Activated CD4-positive, alpha-beta T cell treated with anti-CD3 and anti-CD28 coated beads for 36 hours (primary cell): ENCODE measurements at regions of chr2 and their contacts with region 1.

Region 1: GRCh38 chr2:88016086-88016959 is at the start of gene RNU2-63P:
- DNase-seq: peak; percentile 86
- ATAC-seq: peak; percentile 93
- H3K4me3 Mint-ChIP-seq: peak within 1 kb of the TSS; percentile 93
- H3K27ac Mint-ChIP-seq: peak within 1 kb of the TSS; percentile 99
- H3K4me1 Mint-ChIP-seq: peaks cover 16% of the 10 kb centered on the region
- H3K27me3 Mint-ChIP-seq: peaks cover 3% of the 10 kb centered on the region
- total RNA-seq, gene RNU2-63P: 1.7 to 8.5 TPM

Region 2: DNA sequence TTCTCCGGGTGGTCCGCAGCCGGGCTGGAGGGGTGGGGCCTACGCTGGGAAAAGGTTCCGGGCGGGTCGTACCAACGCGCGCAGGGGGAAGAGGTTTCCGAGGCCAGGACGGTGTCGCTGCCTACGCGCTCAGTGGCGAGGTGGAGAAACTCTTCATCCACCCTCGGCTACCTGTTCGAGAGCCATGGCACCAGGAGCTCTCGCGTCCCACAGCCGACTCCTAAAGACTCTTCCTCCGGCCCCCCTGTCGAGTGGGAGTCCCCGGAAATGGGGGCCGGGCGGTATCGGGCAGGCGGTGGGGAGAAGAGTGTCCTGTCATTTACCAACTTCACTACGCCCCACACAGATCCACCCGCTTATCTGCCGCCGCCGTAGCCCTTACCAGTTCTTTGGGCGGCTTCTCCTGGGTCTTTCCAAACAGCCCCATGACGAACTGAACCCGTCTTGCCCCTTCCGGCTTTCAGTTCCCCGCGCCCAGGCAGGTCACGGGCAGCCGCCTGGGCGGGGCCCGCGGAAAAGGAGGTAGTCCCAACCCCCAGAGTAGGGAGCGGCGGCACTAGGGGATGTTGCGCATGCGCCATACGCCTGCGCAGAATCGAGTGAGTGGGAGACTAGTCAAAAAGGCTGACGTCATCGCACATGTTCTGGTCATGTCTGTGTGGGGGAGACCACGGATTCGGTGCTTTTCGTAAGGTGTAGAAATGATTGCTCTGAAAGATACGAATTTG is 1453.2 kb before region 1 on chr2 and contains the start of gene CHMP3:
- CTCF ChIA-PET with region 1: no interaction called
- POLR2A ChIA-PET with region 1: no interaction called
- intact Hi-C with region 1: no loop called
- DNase-seq: peak; percentile 97
- ATAC-seq: peak; percentile 92
- H3K4me3 Mint-ChIP-seq: peak within 1 kb of the TSS; percentile 95
- H3K27ac Mint-ChIP-seq: peak within 1 kb of the TSS; percentile 99
- H3K4me1 Mint-ChIP-seq: peaks cover 30% of the 10 kb centered on the region
- H3K27me3 Mint-ChIP-seq: no peaks in the 10 kb centered on the region
- total RNA-seq, gene CHMP3: 35.0 to 35.8 TPM

Region 3: GRCh38 chr2:88038263-88039105 is 22.2 kb after region 1 on chr2:
- CTCF ChIA-PET with region 1: interaction called, 3 read pairs
- POLR2A ChIA-PET with region 1: interaction called, 11 read pairs
- intact Hi-C with region 1: no loop called
- DNase-seq: no peak
- ATAC-seq: peak; percentile 91
- H3K4me3 Mint-ChIP-seq: no peak overlapping the region
- H3K27ac Mint-ChIP-seq: peak overlapping the region; percentile 53
- H3K4me1 Mint-ChIP-seq: peaks cover 38% of the 10 kb centered on the region
- H3K27me3 Mint-ChIP-seq: no peaks in the 10 kb centered on the region

Region 4: DNA sequence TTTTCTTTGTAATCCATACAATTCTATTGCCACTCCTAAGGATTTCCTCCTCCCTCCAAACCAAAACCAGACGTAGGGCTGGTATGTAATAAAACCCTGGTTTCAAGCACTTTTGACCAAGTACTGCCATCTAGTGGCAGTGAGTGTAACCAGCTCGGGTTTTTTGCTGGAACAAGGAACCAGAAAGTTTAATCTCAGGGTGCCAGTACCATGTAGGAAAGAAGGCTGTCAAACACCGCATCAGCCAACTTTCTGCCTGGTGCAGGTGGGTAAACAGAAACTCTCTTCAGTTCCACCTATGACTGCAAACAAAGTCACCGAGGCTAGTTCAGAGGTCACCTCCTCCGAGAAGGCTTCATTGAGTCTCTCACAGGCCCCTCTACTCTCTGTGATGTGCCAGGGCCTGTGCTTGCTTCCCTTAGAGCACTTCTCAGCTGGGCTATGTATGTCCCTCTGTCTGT is 143.7 kb after region 1 on chr2:
- CTCF ChIA-PET with region 1: no interaction called
- POLR2A ChIA-PET with region 1: no interaction called
- intact Hi-C with region 1: loop called (anchors 1 to 5 kb)
- DNase-seq: peak; percentile 67
- ATAC-seq: peak; percentile 58
- H3K4me3 Mint-ChIP-seq: no peak overlapping the region
- H3K27ac Mint-ChIP-seq: no peak overlapping the region
- H3K4me1 Mint-ChIP-seq: no peaks in the 10 kb centered on the region
- H3K27me3 Mint-ChIP-seq: peaks cover 3% of the 10 kb centered on the region